HepG2 (cell line): ENCODE measurements at regions of chr14 and their contacts with region 1.

Region 1: DNA sequence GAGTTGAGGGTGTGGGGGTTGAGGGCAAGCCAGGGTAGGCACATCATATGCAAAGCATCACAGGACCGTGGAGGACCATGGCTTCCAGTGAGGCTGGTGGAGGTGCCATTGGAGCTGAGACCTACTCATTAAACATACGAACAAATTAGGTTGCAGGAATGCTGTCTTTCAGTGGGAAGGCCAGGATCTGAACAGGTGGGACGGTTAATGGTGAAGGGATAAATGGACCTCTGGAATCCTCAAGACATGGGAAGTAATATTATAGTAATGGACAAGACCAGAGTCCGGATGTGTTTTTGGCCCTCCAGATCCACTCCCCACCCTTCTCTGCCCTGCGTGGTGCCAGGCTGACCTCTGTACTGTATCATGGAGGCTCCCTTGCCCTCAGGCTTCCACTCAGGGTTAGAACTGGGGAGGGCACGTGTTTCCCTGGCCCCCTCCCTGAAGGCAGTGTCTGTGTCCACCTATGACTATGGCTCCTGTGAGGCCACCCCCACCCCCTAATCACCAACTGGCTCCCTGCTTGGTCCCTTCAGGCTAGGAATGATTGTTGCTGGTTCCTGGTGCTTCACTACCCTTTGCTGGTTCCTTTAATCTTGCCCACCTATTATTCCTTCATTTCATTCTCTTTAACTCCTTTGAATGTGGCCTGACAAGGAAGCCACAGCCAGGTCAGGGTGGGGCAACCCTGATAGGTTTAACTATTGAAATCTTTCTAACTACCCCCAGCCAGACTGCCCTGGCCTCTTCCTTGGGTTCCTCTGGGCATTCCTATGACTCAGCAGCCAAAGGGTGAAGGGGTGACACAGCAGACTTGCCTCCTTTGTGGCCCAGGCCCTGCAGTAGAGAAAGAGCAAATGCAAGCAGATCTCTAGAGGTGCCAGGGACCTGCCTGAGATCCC is 10.7 kb downstream of the DHRS2 start:
- DNase-seq: peak; percentile 76
- ATAC-seq: peak; percentile 4
- H3K4me3 ChIP-seq: no peak overlapping the region
- H3K27ac ChIP-seq: peak overlapping the region; percentile 3
- H3K4me1 ChIP-seq: peaks cover 27% of the 10 kb centered on the region
- H3K27me3 ChIP-seq: peaks cover 0 to 18% of the 10 kb centered on the region in 2 experiments; a peak in 1 of 5 replicates
- CTCF ChIP-seq: no peak; the same call in 1 of the 2 replicates
- EP300 ChIP-seq: 0 out of 4 replicates have a peak, but pooled peaks of 1 of the 2 experiments have one; percentile 17
- POLR2A ChIP-seq: peak in 1 of 2 experiments; percentile 97; a peak in 2 of 4 replicates
- RAD21 ChIP-seq: peak; percentile 77

Region 2: DNA sequence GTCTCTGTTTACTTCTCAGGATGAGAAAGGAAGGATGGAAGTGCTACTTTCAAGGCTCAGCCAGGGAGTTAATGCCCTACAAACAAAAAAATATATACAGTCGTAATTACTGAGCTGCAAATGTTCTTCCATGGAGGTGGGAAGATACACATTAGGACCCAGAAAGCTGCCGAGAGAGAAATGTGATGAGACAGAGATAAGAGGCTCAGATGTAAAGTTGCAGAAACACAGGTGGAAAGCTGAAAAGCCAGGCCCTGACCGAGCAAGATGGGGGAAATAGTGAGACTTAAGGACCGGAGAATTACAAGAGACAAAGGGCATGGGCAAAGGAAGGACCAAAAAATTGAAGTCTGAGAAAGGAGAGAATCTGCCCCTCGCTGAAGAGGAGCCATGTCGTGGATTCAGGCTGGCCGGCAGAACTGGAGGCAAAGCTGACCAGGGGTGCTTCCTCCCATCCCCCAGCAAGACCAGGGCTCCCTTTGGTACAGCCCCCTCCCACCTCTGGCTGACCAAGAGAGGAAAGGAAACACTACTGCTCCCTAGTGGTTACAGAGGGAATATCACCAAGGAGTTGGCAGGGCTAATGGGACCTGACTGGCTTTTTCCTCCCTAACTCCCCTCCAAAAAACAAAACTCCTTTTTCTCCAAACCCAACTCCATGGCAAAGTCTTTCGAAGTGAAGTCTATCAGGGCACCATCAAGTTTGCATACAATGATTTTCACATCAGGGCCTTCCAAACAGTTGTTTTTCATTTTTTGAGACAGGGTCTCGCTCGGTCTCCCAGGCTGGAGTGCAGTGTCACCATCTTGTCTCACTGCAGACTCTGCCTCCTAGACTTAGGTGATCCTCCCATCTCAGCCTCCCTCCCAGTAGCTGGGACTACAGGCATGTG is 107.4 kb before region 1 on chr14:
- CTCF ChIA-PET with region 1: no interaction called
- POLR2A ChIA-PET with region 1: no interaction called
- in situ Hi-C with region 1: no loop called
- intact Hi-C with region 1: no loop called
- DNase-seq: peak; percentile 86
- ATAC-seq: peak; percentile 85
- H3K4me3 ChIP-seq: no peak overlapping the region
- H3K27ac ChIP-seq: no peak overlapping the region
- H3K4me1 ChIP-seq: peaks cover 7% of the 10 kb centered on the region
- H3K27me3 ChIP-seq: no peaks in the 10 kb centered on the region
- CTCF ChIP-seq: peak; percentile 96
- EP300 ChIP-seq: no peak
- POLR2A ChIP-seq: no peak
- RAD21 ChIP-seq: peak; percentile 81

Region 3: DNA sequence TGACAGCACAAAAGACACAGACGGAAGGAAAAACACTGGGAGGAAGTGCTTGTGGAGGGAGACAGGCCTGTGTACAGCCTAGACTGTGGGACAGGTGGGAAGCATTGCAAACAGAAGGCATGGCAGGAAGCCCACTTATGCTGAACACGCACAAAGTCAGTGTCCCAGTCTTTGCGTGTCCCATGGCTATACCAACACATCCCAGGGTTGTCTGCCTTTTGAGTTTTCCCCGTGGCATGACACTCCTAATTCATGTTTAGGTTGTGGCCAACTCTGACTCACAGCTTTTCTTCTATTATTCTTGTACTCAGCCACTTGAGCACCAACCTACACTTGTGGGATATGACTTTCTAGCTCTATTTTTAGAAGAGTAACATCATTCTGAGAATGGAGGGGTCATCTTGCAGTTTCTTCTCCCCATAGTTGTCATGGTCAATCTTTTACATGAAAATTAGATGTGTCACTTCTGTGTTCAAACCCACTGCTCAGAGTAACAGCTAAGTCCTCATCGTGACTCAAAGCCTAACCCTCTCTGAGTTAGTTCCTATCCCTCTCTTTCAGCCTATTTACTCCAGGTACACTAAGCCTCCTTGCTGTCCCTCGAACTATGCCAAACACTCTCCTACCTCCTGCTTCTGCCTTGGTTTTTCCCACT is 40.8 kb before region 1 on chr14:
- CTCF ChIA-PET with region 1: no interaction called
- POLR2A ChIA-PET with region 1: interaction called, 1,105 read pairs
- in situ Hi-C with region 1: no loop called
- intact Hi-C with region 1: no loop called
- DNase-seq: no peak
- ATAC-seq: no peak
- H3K4me3 ChIP-seq: no peak overlapping the region
- H3K27ac ChIP-seq: no peak overlapping the region
- H3K4me1 ChIP-seq: peaks cover 88% of the 10 kb centered on the region
- H3K27me3 ChIP-seq: no peaks in the 10 kb centered on the region
- CTCF ChIP-seq: no peak
- EP300 ChIP-seq: no peak
- POLR2A ChIP-seq: 0 out of 4 replicates have a peak, but pooled peaks of 1 of the 2 experiments have one; percentile 7
- RAD21 ChIP-seq: no peak

Region 4: GRCh38 chr14:23657951-23658470 is 11.1 kb after region 1 on chr14:
- CTCF ChIA-PET with region 1: no interaction called
- POLR2A ChIA-PET with region 1: interaction called, 11 read pairs
- in situ Hi-C with region 1: no loop called
- intact Hi-C with region 1: no loop called
- DNase-seq: no peak
- ATAC-seq: no peak
- H3K4me3 ChIP-seq: no peak overlapping the region
- H3K27ac ChIP-seq: no peak overlapping the region
- H3K4me1 ChIP-seq: no peaks in the 10 kb centered on the region
- H3K27me3 ChIP-seq: peaks cover 5 to 30% of the 10 kb centered on the region in 2 experiments; a peak in 3 of 5 replicates
- CTCF ChIP-seq: no peak
- EP300 ChIP-seq: no peak
- POLR2A ChIP-seq: no peak
- RAD21 ChIP-seq: no peak

Region 5: GRCh38 chr14:23881282-23881681 is 234.4 kb after region 1 on chr14:
- CTCF ChIA-PET with region 1: no interaction called
- POLR2A ChIA-PET with region 1: interaction called, 11 read pairs
- in situ Hi-C with region 1: no loop called
- intact Hi-C with region 1: no loop called
- DNase-seq: no peak
- ATAC-seq: no peak
- H3K4me3 ChIP-seq: no peak overlapping the region
- H3K27ac ChIP-seq: no peak overlapping the region
- H3K4me1 ChIP-seq: peaks cover 39% of the 10 kb centered on the region
- H3K27me3 ChIP-seq: peaks cover 0 to 9% of the 10 kb centered on the region in 2 experiments; a peak in 1 of 5 replicates
- CTCF ChIP-seq: no peak
- EP300 ChIP-seq: no peak
- POLR2A ChIP-seq: no peak
- RAD21 ChIP-seq: no peak